IMR-90 (cell line): ENCODE measurements at regions of chr3 and their contacts with region 1.

Region 1: GRCh38 chr3:185733980-185734724 is 90.7 kb downstream of the IGF2BP2 start:
- DNase-seq: peak; percentile 89
- ATAC-seq: peak; percentile 31
- H3K4me3 ChIP-seq: no peak overlapping the region
- H3K27ac ChIP-seq: no peak overlapping the region
- H3K4me1 ChIP-seq: peaks cover 34% of the 10 kb centered on the region
- H3K27me3 ChIP-seq: no peaks in the 10 kb centered on the region
- CTCF ChIP-seq: peak; percentile 79
- POLR2A ChIP-seq: no peak
- RAD21 ChIP-seq: peak; percentile 84

Region 2: GRCh38 chr3:185605566-185605965 is 128.6 kb before region 1 on chr3:
- CTCF ChIA-PET with region 1: no interaction called
- POLR2A ChIA-PET with region 1: no interaction called
- dilution Hi-C with region 1: no loop called
- in situ Hi-C with region 1: no loop called
- intact Hi-C with region 1: no loop called
- DNase-seq: no peak
- ATAC-seq: no peak
- H3K4me3 ChIP-seq: no peak overlapping the region
- H3K27ac ChIP-seq: no peak overlapping the region
- H3K4me1 ChIP-seq: no peaks in the 10 kb centered on the region
- H3K27me3 ChIP-seq: no peaks in the 10 kb centered on the region
- CTCF ChIP-seq: no peak
- POLR2A ChIP-seq: no peak
- RAD21 ChIP-seq: no peak

Region 3: DNA sequence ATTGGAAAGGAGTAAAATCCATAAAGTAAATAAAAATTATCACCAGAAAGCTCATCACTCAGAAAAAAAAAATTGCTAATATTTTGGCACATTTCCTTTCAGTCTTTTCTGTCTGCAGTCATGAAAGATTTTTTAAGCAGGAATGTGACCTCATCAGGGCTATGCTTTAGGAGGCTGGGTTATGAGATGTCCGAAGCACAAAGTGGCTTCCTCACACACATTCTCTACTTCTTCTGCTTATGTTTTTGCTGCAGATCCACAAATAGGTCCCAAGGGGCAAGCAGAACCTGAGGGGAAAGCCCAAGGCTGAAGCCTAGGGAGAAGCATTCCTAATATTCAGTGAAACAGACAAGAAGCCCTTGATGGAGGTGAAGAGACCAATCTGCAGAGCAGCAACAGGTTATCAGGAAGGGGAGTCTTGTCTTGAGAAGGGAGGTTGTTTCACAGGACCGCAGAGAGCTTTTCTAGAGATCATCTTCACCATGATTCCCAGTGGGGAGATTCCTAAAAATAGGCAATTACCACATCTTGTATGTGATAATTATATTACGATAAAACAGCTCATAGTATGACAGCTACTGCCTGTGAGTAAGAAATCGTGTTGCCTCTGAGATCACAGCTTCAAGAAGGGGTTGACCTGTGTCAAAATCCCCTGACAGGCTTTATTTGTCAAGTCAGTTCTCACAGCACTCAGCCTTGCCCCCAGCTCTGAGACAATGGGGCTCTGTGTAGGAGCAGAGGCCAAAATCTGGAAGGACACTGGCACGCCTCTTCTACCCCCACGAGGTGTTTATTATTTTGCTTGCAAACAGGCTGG is 30.2 kb after region 1 on chr3:
- CTCF ChIA-PET with region 1: interaction called, 5 read pairs
- POLR2A ChIA-PET with region 1: interaction called, 10 read pairs
- dilution Hi-C with region 1: no loop called
- in situ Hi-C with region 1: no loop called
- intact Hi-C with region 1: no loop called
- DNase-seq: peak; percentile 54
- ATAC-seq: peak; percentile 27; the same call in 1 of the 2 replicates
- H3K4me3 ChIP-seq: no peak overlapping the region
- H3K27ac ChIP-seq: no peak overlapping the region
- H3K4me1 ChIP-seq: peaks cover 36% of the 10 kb centered on the region
- H3K27me3 ChIP-seq: no peaks in the 10 kb centered on the region
- CTCF ChIP-seq: no peak
- POLR2A ChIP-seq: no peak
- RAD21 ChIP-seq: no peak

Region 4: DNA sequence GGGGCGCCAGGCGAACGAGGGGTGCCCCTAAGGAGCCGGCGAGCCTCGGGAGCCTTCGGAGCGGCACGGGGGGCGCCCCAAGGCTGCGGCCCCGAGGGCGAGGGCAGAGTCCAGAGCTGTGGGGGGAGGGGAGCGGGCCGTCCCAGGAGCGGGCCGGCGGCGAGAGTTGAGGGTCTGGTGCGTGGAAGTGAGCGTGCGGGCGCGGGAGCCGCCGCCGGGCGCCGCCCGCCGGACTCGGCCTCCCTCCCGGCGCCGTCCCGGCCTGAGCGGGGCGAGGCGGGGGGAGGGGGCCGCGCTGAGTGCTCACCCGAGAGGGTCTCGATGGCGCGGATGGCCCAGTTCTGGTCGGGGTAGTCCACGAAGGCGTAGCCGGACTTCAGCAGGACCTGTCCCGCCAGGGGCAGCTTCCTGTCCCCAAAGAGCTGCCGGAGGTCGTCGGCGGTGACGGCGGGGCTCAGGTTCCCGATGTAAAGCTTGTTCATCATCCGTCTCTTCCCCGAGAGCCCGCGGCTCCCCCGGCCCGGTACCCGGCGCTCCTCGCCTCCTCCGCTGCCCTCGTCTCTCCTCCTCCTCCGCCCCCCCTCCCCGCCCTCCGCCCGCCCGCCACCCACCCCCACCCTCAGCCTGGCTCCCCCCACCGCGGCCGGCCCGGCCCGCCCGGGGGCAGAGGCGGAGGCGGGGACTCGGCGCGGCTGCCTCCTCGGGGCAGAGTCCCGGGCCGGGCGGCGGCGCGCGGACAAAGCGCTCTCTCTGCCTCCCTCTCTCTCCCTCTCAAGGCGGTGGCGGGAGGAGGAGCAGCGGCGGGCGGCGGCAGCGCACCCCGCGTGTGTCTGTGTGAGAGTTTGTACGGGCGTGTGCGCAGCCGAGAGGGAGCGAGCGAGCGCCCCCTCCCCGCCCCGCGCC is 90.6 kb after region 1 on chr3 and contains the start of gene IGF2BP2:
- CTCF ChIA-PET with region 1: interaction called, 15 read pairs
- POLR2A ChIA-PET with region 1: interaction called, 3 read pairs
- dilution Hi-C with region 1: no loop called
- in situ Hi-C with region 1: no loop called
- intact Hi-C with region 1: loop called (anchors 2 kb)
- DNase-seq: peak; percentile 80
- ATAC-seq: peak; percentile 82
- H3K4me3 ChIP-seq: peak within 1 kb of the TSS; percentile 88
- H3K27ac ChIP-seq: peak within 1 kb of the TSS; percentile 100
- H3K4me1 ChIP-seq: peaks cover 4% of the 10 kb centered on the region
- H3K27me3 ChIP-seq: no peaks in the 10 kb centered on the region
- CTCF ChIP-seq: peak; percentile 27; the same call in 1 of the 2 replicates
- POLR2A ChIP-seq: peak; percentile 82
- RAD21 ChIP-seq: peak; percentile 27
- total RNA-seq, gene IGF2BP2: 88.2 and 126 TPM in 2 replicates

Region 5: DNA sequence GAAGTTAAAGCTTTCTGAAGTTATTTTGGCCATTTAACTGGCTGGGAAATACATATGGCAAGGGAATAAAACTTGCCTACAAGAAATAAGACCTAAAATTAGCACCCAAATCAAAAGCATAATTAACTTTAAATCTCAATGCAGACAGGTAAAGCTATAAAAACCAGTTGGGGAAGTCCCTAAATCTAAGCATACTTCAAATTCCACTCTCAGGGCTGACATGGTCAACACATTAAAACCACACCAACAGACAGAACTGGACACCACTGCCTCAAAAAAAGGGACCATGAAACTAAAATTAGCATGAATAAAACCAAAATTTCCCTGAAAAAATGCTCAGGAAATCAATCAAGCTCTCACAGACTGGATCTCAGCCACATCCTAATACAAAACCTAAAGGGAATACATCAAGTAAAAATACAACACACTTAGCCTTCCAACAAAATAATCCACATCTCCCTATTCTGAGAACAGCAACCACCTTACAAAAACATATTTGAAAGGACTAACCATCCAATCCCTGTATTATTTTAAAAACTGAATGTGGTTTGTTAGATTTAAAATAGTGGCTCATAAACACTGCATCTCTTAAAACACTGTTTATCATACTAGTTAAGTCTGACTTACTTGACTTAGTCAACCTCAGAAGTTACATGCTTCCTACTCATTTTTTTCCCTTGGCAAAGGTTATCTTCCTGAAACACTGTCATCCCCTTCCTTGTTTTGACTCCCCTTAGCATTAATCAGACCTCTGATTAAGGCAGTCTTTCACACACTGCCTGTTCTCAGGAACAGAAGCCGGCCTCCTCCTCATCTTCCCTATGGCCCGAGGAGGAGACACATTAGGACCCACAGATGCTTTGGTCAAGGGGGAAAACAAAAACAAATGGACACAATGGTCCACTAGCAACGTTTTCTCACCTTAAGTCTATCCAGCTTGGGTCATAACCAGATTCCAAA is 195.3 kb after region 1 on chr3:
- CTCF ChIA-PET with region 1: no interaction called
- POLR2A ChIA-PET with region 1: no interaction called
- dilution Hi-C with region 1: no loop called
- in situ Hi-C with region 1: loop called (anchors 10 kb)
- intact Hi-C with region 1: loop called (anchors 2 kb)
- DNase-seq: peak; percentile 61
- ATAC-seq: peak; percentile 12; the same call in 1 of the 2 replicates
- H3K4me3 ChIP-seq: no peak overlapping the region
- H3K27ac ChIP-seq: no peak overlapping the region
- H3K4me1 ChIP-seq: peaks cover 29% of the 10 kb centered on the region
- H3K27me3 ChIP-seq: no peaks in the 10 kb centered on the region
- CTCF ChIP-seq: no peak
- POLR2A ChIP-seq: no peak
- RAD21 ChIP-seq: no peak